Activated B cell treated with CpG ODN at 0.5 μM for 24 hours (primary cell): ENCODE measurements at regions of chr22 and their contacts with region 1.

Region 1: DNA sequence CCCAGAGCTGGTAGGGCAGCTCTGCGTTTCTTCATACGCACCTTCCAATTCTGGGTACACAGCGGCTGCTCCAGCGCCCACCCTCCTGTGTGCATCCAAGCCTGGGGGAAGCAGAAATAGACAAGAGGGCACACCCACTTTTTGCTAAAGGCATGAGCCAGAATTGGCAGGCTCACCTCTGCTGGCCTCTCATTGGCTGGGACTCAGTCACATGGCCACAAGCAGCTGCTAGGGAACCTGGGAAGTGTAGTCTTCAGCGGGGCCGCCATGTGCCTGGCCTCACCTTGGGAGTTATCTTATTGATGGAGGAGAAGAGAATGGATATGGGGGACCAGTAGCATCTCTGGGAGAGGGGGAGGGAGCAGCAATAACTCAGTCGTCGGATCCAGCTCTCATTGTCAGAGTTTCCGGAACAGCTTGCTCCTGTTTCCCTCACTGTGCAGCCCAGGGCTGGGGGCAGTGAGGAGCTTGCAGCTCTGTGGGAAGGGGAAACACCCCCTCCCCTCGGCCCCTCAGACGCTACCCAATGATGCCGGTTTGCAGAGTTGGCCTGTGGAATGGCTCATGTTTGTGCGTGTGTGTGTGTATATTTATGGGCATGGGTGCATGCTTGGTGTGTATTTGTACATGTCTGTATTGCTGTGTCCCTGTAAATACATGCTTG is 11.8 kb upstream of the MIEF1 start:
- DNase-seq: peak; percentile 55
- ATAC-seq: peak; percentile 99
- H3K4me3 Mint-ChIP-seq: peak overlapping the region; percentile 17
- H3K27ac Mint-ChIP-seq: peak overlapping the region; percentile 13
- H3K4me1 Mint-ChIP-seq: peaks cover 23% of the 10 kb centered on the region
- H3K27me3 Mint-ChIP-seq: no peaks in the 10 kb centered on the region
- CTCF ChIP-seq: no peak

Region 2: DNA sequence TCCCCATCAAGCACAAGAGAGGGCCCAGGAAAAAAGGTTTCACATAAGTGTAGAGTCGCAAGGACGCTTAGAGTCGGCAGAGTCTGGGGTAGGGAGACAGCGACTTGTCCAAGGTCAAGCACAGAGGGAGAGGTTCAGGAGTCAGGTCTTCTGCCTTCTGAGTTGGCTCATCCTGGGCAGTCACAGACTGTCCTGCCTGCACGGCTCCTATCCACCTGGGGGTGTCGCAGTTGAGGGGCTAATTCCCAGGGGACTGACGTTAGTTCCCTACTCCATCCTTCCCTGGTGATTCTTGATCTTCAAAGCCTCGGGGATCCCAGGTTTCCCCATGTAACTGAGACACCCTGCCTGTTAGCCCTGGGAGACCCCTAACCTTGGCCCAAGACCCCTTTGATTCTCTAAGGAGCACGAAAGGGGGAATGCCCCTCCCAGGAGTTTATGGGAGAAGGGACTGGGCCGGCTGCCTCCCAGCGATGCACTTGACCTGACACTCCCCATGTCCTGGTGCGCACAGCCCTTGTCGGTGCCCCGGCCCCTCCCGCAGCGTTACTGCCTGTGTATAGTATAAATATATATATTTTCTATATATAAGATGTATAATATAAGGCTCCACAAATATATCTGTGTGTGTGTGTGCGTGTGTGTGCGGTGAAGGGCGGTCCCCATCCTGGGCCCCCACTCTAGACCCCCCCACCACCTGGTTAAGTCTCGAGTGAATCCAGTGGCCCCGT is 105.4 kb before region 1 on chr22:
- CTCF ChIA-PET with region 1: no interaction called
- POLR2A ChIA-PET with region 1: no interaction called
- intact Hi-C with region 1: no loop called
- DNase-seq: no peak
- ATAC-seq: no peak
- H3K4me3 Mint-ChIP-seq: no peak overlapping the region
- H3K27ac Mint-ChIP-seq: no peak overlapping the region
- H3K4me1 Mint-ChIP-seq: peaks cover 24% of the 10 kb centered on the region
- H3K27me3 Mint-ChIP-seq: no peaks in the 10 kb centered on the region
- CTCF ChIP-seq: no peak

Region 3: DNA sequence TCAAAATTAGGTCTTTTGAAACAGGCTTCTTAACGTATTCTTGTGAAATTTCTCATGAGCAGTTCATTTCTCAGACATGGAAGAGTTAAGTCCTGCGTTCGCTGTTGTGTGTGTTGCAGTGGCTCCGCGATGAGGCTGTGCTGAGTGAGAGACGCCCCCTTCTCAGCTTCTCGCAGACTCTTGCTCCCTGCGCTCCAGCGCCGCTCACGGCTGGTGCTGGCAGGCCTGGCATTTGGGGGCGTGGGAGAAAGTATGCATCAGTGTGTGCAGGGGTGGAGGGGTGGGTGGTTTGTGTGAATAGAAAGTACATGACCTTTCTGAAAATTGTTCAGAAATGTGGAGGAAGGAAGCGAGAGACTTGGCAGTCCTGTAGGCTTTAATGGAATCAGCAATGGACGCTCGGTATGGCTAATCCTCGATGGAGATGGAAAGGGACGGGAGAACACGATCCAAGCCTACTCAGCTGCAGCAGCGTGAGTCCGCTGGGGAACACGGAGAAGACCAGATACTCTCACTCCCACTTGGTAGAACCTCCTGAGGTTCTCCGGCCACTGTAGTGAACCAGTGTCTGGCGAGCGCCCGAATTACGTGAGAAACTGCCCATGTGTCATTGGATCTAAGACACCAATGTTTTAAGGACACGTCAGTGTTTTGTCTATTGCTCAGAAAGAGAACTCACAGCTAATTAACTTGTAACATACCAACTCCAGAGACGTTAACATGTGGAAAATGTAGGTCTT is 84.8 kb before region 1 on chr22:
- CTCF ChIA-PET with region 1: interaction called, 13 read pairs
- POLR2A ChIA-PET with region 1: no interaction called
- intact Hi-C with region 1: no loop called
- DNase-seq: no peak
- ATAC-seq: no peak
- H3K4me3 Mint-ChIP-seq: no peak overlapping the region
- H3K27ac Mint-ChIP-seq: no peak overlapping the region
- H3K4me1 Mint-ChIP-seq: peaks cover 20% of the 10 kb centered on the region
- H3K27me3 Mint-ChIP-seq: no peaks in the 10 kb centered on the region
- CTCF ChIP-seq: no peak

Region 4: GRCh38 chr22:39471381-39472141 is 18.7 kb before region 1 on chr22:
- CTCF ChIA-PET with region 1: interaction called, 9 read pairs
- POLR2A ChIA-PET with region 1: interaction called, 8 read pairs
- intact Hi-C with region 1: loop called (anchors 2 kb)
- DNase-seq: peak; percentile 47
- ATAC-seq: peak; percentile 79
- H3K4me3 Mint-ChIP-seq: peak overlapping the region; percentile 65
- H3K27ac Mint-ChIP-seq: peak overlapping the region; percentile 90
- H3K4me1 Mint-ChIP-seq: peaks cover 73% of the 10 kb centered on the region
- H3K27me3 Mint-ChIP-seq: no peaks in the 10 kb centered on the region
- CTCF ChIP-seq: no peak

Region 5: DNA sequence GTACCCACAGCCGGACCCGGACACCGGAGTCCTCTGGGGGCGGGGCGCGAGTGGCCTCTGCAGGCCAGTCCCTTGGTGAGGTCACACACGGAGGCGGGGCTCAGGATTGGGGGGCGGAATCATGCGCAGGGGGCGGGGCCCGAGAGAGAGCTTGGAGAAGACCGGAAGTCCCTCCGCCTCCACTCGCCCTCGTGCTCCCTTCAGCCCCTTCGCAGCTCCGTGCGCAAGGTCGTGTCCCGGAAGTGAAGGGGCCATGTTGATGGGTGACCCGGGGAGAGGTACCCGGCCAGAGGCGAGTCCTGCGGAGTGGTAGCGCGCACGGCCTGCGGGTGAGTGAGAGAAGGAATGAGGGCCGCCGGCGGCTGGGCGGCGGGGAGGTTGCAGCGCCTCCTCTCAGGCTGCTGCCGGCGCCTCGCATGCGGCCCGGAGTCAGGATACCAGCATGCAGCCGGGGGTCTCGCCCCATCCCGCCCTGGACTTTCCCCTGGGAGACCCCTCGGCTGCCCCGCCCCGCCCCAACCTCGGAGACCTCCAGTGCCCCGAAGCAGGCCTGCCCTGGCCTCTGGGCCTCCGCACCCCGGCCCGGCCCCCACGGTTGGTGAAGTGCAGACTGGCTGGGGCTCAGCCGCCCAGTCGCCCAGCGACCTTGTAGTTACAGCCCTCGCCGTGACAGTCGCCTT is 12.0 kb after region 1 on chr22 and contains the start of gene MIEF1:
- CTCF ChIA-PET with region 1: interaction called, 6 read pairs
- POLR2A ChIA-PET with region 1: interaction called, 5 read pairs
- intact Hi-C with region 1: loop called (anchors 1 kb)
- DNase-seq: peak; percentile 89
- ATAC-seq: peak; percentile 96
- H3K4me3 Mint-ChIP-seq: peak within 1 kb of the TSS; percentile 95
- H3K27ac Mint-ChIP-seq: peak within 1 kb of the TSS; percentile 89
- H3K4me1 Mint-ChIP-seq: peaks cover 34% of the 10 kb centered on the region
- H3K27me3 Mint-ChIP-seq: no peaks in the 10 kb centered on the region
- CTCF ChIP-seq: no peak
- total RNA-seq, gene MIEF1: 38.2 and 41.3 TPM in 2 replicates

Region 6: DNA sequence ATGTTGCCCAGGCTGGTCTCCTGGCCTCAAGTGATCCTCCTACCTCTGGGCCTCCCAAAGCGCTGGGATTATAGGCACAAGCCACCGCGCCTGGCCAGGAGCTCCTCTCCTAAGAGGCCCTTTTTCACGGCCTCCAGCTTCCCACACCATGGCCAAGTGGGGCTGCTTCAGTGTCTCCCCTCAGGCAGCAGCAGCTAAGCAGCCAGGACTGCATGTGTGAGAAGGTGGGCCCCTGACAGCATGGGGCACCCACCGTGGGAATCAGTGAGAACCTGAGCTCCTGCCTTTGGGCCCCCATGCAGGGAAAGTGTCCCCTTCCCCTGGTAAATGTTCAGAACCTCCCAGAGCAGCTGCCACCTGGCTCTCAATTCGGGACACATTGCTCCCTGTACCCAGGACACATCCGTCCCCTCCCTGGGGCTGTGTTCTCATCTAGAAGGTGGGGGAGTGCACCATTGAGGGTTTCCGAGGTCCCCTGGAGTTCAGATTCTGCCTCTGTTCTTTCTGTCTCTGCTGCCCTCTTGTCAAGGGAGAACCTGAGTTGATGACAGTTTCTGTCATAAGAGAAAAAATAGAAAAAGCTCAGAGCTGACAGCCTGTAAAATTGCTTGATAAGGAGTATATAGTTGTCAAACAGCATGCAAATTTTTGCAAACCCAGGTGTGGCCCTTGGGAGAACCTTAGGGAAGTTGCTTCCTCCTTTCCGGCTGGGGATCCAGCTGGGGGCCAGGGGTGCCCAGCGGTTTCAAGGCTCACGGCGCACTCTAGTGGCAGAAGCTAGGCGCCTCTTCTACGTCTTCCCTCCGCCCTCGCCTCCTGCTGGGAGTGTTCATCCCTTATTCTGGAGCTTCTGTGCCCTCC is 534.2 kb after region 1 on chr22:
- CTCF ChIA-PET with region 1: interaction called, 10 read pairs
- POLR2A ChIA-PET with region 1: no interaction called
- intact Hi-C with region 1: no loop called
- DNase-seq: peak; percentile 46
- ATAC-seq: peak; percentile 87
- H3K4me3 Mint-ChIP-seq: no peak overlapping the region
- H3K27ac Mint-ChIP-seq: no peak overlapping the region
- H3K4me1 Mint-ChIP-seq: peaks cover 5% of the 10 kb centered on the region
- H3K27me3 Mint-ChIP-seq: no peaks in the 10 kb centered on the region
- CTCF ChIP-seq: peak; percentile 50